Activated T-helper 2 cell treated with anti-CD3 and anti-CD28 coated beads, Interferon-gamma antibody, Interleukin-2, Interleukin-4, amounts not matched to agents 10 μg/mL and 5 μg/mL and 100 μg/mL, durations not matched to agents 14 hours and 24 hours and 36 hours (primary cell): ENCODE measurements at regions of chr20 and their contacts with region 1.

Region 1: DNA sequence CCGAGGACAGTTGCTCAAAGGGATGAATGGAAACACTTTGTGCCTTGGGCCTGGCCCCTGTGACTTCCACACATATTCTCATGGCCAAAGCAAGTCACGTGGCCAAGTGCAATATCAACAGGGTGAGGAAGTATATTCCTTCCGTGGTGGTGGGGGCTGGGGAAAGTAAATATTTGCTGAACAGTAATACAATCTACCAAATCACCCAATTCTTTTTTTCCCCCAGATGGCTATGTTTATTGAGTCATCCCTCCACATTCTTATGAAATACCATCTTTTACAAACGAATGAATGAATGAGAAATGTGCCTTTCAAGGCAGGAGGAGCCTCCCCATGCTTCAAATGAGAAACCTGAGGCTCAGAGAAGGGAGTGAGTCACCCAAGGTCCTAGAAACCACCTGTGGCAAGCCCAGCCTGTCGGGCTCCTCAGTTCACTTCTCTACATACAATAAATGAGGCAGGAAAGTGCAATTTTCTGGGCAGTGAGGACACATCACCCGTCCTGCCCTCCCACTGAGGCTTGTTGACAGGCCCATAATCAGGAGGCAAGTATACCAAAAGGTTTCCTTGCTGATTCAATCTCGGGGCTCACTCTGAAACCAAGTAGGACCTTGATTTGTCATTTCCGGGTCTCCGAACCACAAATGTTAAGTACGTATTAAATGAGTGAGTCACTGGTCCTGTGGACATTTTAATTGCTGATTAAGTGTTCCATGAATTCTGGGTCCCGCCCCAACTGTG is 25.3 kb upstream of the TOP1 start:
- DNase-seq: peak; percentile 66
- H3K4me3 Mint-ChIP-seq: peak overlapping the region; percentile 51
- H3K27ac Mint-ChIP-seq: peak overlapping the region; percentile 94
- H3K4me1 Mint-ChIP-seq: peaks cover 43% of the 10 kb centered on the region
- H3K27me3 Mint-ChIP-seq: no peaks in the 10 kb centered on the region

Region 2: DNA sequence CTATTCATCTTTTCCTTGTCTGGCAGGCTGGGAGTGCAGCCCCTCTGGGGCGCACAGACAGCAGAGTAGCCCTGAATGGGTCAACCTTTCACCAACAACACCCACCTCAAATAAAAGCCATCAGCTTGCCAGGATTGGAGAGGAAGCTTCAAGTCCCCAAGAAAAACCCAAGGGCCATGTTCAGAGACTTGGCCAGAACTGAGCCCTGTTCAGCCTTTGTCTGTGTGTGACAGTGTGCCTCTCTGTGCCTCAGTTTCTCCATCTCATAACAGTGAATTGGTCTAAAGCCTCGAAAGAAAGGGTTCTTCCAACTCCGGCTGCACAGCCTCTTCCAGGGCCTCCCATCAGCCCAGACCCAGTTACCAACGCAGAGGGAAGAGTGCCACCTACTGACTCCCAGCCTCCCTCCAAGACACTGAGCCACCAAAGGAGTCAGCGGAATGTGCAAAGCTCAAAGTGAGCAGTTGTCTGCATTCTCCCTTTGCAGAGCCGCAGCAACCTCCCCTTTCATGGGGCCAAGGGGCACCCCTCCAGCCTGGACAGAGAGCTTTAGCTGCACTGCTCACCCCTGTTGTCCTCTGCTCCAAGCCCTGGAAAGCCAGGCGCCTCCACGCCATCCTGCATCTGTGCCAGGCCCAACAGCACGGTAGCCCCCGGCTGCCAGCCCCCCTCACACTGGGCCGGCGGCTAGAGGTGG is 57.4 kb before region 1 on chr20:
- intact Hi-C with region 1: no loop called
- DNase-seq: no peak
- H3K4me3 Mint-ChIP-seq: no peak overlapping the region
- H3K27ac Mint-ChIP-seq: no peak overlapping the region
- H3K4me1 Mint-ChIP-seq: no peaks in the 10 kb centered on the region
- H3K27me3 Mint-ChIP-seq: peaks cover 18% of the 10 kb centered on the region

Region 3: GRCh38 chr20:41028348-41029148 is 25.2 kb after region 1 on chr20 and contains the start of gene TOP1:
- intact Hi-C with region 1: loop called (anchors 1 kb)
- DNase-seq: peak; percentile 100
- H3K4me3 Mint-ChIP-seq: peak within 1 kb of the TSS; percentile 82
- H3K27ac Mint-ChIP-seq: peak within 1 kb of the TSS; percentile 76
- H3K4me1 Mint-ChIP-seq: peaks cover 41% of the 10 kb centered on the region
- H3K27me3 Mint-ChIP-seq: no peaks in the 10 kb centered on the region
- total RNA-seq, gene TOP1: 116 and 118 TPM in 2 replicates

Region 4: DNA sequence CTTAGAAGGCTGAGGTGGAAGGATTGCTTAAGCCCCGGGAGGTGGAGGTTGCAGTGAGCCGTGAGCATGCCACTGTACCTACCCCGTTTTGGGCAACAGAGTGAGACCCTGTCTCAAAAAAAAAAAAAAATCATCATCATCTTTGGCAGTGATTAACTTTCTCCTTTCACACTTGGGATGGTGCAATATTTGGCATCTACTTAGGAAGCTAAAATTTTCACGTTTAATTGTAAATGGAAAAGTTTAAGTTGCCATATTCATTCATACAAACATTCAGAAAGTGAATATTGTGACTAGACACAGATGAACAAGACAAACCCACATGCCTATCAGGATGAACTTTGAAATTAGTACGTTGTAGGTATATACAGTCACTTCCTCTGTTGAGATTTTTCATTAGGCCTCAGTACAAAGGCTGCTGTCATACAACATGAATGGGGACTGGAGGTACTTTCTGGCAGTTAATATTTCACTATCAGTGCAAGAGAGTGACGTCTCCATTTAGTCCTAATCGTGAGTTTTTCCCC is 35.6 kb after region 1 on chr20:
- intact Hi-C with region 1: loop called (anchors 2 kb)
- DNase-seq: no peak
- H3K4me3 Mint-ChIP-seq: no peak overlapping the region
- H3K27ac Mint-ChIP-seq: peak overlapping the region; percentile 84
- H3K4me1 Mint-ChIP-seq: peaks cover 82% of the 10 kb centered on the region
- H3K27me3 Mint-ChIP-seq: no peaks in the 10 kb centered on the region

Region 5: DNA sequence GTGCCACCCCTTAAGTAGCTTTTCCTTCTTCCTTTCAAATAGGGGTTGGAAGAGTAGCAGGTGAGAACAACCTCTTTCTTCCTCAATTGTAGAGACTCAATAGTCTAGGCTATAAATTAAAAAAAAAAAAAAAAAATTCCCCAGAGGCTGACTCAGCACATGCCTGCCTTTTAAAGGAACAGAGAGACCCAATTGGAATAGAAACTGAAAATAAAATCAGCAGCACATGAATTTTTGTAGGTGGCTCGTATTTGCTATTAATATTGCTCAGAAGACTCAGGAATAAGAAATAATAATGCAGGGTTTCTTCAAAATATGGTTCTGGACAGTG is 44.6 kb after region 1 on chr20:
- intact Hi-C with region 1: loop called (anchors 1 kb)
- DNase-seq: no peak
- H3K4me3 Mint-ChIP-seq: peak overlapping the region; percentile 78
- H3K27ac Mint-ChIP-seq: peak overlapping the region; percentile 91
- H3K4me1 Mint-ChIP-seq: peaks cover 83% of the 10 kb centered on the region
- H3K27me3 Mint-ChIP-seq: no peaks in the 10 kb centered on the region

Region 6: GRCh38 chr20:41078329-41078728 is 75.0 kb after region 1 on chr20:
- intact Hi-C with region 1: loop called (anchors 1 kb)
- DNase-seq: no peak
- H3K4me3 Mint-ChIP-seq: no peak overlapping the region
- H3K27ac Mint-ChIP-seq: peak overlapping the region; percentile 14
- H3K4me1 Mint-ChIP-seq: peaks cover 68% of the 10 kb centered on the region
- H3K27me3 Mint-ChIP-seq: no peaks in the 10 kb centered on the region

Region 7: GRCh38 chr20:41161886-41162285 is 158.6 kb after region 1 on chr20:
- intact Hi-C with region 1: loop called (anchors 1 kb)
- DNase-seq: no peak
- H3K4me3 Mint-ChIP-seq: no peak overlapping the region
- H3K27ac Mint-ChIP-seq: peak overlapping the region; percentile 18
- H3K4me1 Mint-ChIP-seq: peaks cover 55% of the 10 kb centered on the region
- H3K27me3 Mint-ChIP-seq: no peaks in the 10 kb centered on the region